HCT116 (cell line): ENCODE measurements at regions of chr18 and their contacts with region 1.

Region 1: GRCh38 chr18:62486304-62486964 is 36.4 kb upstream of the ZCCHC2 start:
- DNase-seq: peak; percentile 94
- ATAC-seq: peak; percentile 86
- H3K4me3 ChIP-seq: peak overlapping the region in 1 of 2 experiments; percentile 48; a peak in 2 of 4 replicates
- H3K27ac ChIP-seq: peak overlapping the region; percentile 78; the same call in 1 of the 2 replicates
- H3K4me1 ChIP-seq: peaks cover 20 to 33% of the 10 kb centered on the region in 2 experiments
- H3K27me3 ChIP-seq: no peaks in the 10 kb centered on the region
- CTCF ChIP-seq: no peak
- POLR2A ChIP-seq: no peak
- RAD21 ChIP-seq: no peak; the same call in 1 of the 2 replicates

Region 2: DNA sequence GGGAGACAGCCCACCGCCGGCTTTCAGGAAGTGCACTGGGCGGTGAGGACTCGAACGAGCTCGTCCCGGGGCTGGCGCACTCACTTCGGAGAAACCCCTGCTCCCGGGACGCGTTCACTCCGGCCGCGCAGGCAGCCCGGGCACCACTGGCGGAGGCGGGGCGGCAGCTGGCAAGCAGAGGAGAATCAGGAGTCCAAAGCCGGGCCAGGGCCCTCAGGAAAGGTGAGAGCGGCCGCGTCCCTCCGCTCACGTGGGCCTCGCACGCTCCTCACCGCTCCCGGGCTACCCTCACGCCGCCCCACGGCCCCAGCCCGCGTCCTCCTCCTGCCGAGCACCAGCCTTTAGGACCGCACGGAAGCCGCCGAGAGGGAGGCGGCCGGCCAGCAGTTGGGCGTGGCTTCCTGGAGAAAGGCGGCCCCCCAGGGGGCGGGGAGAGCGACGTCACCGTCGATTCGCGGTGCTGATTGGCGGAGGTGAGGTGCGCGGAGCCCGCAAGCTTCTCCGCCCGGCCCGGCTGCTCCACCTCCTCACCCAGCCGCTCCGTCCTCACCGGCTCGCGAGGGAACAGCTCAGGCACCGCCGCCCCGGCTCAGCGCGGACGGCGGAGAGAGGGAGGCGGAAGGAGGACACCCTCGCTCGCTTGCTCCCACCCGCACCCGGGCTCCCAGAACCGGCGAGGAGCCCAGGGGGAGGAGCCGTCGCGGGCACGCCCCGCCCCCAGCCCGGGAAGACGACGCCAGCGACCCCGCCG is 36.2 kb after region 1 on chr18 and contains the start of gene ZCCHC2:
- CTCF ChIA-PET with region 1: no interaction called
- POLR2A ChIA-PET with region 1: no interaction called
- RAD21 ChIA-PET with region 1: no interaction called
- intact Hi-C with region 1: loop called (anchors 2 kb)
- DNase-seq: peak; percentile 94
- ATAC-seq: peak; percentile 83
- H3K4me3 ChIP-seq: peak within 1 kb of the TSS; percentile 76 to 83
- H3K27ac ChIP-seq: peak within 1 kb of the TSS; percentile 98
- H3K4me1 ChIP-seq: peaks cover 21 to 34% of the 10 kb centered on the region in 2 experiments
- H3K27me3 ChIP-seq: no peaks in the 10 kb centered on the region
- CTCF ChIP-seq: no peak
- POLR2A ChIP-seq: peak; percentile 58
- RAD21 ChIP-seq: no peak
- total RNA-seq, gene ZCCHC2: 17.7 TPM

Region 3: DNA sequence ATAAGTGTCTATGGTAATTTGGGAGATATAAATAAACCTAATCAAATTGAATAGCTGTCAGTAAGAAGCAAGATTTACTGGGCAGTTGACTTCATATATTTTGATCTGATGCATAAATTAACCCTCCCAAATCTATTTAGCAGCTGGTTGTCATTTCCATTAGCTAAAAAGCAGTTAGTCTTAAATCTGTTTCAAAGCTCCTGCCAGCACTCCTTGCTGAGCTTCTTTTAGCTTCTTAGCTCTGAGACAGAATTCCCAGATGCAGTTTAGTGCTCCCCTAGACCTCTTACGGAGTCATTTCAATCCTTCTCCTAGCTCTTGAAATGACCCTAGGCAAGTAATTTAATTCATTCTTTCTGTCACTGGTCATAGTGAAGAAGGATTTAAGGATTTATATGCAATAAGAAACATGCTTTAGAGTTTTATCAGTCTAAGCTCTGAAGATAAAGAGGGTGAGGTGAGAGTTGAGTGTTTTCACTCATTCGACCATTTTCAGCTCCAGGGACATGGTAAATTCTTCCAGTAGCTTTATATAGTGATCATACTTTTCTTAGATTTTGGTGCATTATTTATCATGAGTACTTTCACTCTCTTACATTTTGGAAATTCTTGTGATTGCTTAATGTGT is 327.8 kb after region 1 on chr18:
- CTCF ChIA-PET with region 1: no interaction called
- POLR2A ChIA-PET with region 1: no interaction called
- RAD21 ChIA-PET with region 1: no interaction called
- intact Hi-C with region 1: no loop called
- DNase-seq: no peak
- ATAC-seq: no peak
- H3K4me3 ChIP-seq: no peak overlapping the region
- H3K27ac ChIP-seq: no peak overlapping the region
- H3K4me1 ChIP-seq: no peaks in the 10 kb centered on the region
- H3K27me3 ChIP-seq: no peaks in the 10 kb centered on the region
- CTCF ChIP-seq: no peak
- POLR2A ChIP-seq: no peak
- RAD21 ChIP-seq: no peak